ENCODE measurements at regions of chr17 and their contacts with region 1.

Region 1: DNA sequence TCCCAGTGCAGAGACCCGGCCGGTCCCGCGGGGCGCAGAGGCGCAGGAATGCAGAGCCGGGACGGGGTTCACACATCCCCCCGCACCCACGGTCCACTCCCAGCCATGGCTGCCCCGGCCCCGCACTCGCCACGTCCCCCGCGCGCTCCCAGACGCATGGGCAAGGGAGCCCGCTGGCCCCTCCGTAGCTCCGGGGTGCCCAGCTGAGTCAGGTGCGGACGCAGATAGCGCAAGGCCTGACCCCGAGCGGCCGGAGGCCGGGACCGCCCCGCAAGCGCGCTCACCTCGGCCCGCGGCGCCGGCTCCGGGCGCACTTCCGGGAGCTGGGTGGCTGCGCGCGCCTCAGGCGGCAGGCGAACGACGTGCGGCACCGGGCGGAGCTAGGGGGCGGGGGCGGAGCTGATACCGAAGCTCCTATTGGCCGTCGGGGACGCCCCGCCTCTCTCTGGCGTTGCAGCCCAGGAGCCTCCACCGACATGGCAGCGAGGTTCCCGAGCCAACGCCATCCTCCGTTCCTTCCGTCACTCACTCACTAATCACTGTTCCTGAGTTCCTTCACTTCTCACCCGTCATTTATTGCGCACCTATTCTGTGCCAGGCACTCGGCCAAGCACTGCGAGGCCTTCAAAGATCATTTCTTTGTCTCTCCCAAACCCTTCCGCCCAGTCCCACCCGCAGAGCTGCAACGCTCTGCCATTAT is at the start of gene ZNF18:
- DNase-seq: peak; percentile 68
- ATAC-seq: peak; percentile 98
- H3K4me3 ChIP-seq: peak within 1 kb of the TSS; percentile 87
- H3K27ac ChIP-seq: peak within 1 kb of the TSS; percentile 23
- H3K4me1 ChIP-seq: peaks cover 3% of the 10 kb centered on the region; the same call in 1 of the 2 replicates
- H3K27me3 ChIP-seq: no peaks in the 10 kb centered on the region
- CTCF ChIP-seq: no peak
- EP300 ChIP-seq: no peak
- POLR2A ChIP-seq: peak; percentile 96
- RAD21 ChIP-seq: no peak
- polyA plus RNA-seq, gene ZNF18: 4.6 to 6.0 TPM

Region 2: DNA sequence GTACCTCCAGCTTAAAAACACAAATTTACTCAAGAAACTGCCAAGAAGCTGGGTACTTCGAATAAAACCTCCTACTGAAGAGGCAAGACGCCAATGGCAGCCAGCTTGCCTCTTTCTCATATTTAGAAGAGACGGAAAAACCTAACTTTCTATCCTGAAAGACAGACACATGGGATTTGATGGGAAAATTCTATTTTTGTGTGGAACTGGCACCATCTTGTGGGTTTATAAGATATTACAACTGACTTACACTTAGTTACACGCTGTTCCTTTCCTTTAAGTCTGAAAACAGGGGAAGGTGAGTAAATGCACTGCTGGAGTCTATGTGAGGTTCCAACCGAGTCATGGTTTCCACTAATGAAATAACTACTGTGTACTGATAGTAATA is 10.4 kb before region 1 on chr17:
- CTCF ChIA-PET with region 1: interaction called, 6 read pairs
- POLR2A ChIA-PET with region 1: no interaction called
- RAD21 ChIA-PET with region 1: interaction called, 3 read pairs
- SMC1A ChIA-PET with region 1: interaction called, 10 read pairs
- in situ Hi-C with region 1: no loop called
- intact Hi-C with region 1: no loop called
- DNase-seq: no peak
- ATAC-seq: no peak
- H3K4me3 ChIP-seq: no peak overlapping the region
- H3K27ac ChIP-seq: no peak overlapping the region
- H3K4me1 ChIP-seq: no peaks in the 10 kb centered on the region
- H3K27me3 ChIP-seq: no peaks in the 10 kb centered on the region
- CTCF ChIP-seq: peak in 2 of 3 experiments; percentile 32 to 37; a peak in 4 of 6 replicates
- EP300 ChIP-seq: no peak
- POLR2A ChIP-seq: no peak
- RAD21 ChIP-seq: peak; percentile 32; the same call in 1 of the 2 replicates

Region 3: GRCh38 chr17:12020642-12021622 is 23.6 kb after region 1 on chr17 and contains the start of gene MAP2K4:
- CTCF ChIA-PET with region 1: interaction called, 3 read pairs
- POLR2A ChIA-PET with region 1: interaction called, 46 read pairs
- RAD21 ChIA-PET with region 1: interaction called, 20 read pairs
- SMC1A ChIA-PET with region 1: interaction called, 14 read pairs
- in situ Hi-C with region 1: no loop called
- intact Hi-C with region 1: loop called (anchors 1 kb)
- DNase-seq: peak; percentile 40
- ATAC-seq: peak; percentile 97
- H3K4me3 ChIP-seq: peak within 1 kb of the TSS; percentile 61
- H3K27ac ChIP-seq: peak within 1 kb of the TSS; percentile 70
- H3K4me1 ChIP-seq: peaks cover 4% of the 10 kb centered on the region; the same call in 1 of the 2 replicates
- H3K27me3 ChIP-seq: no peaks in the 10 kb centered on the region
- CTCF ChIP-seq: no peak
- EP300 ChIP-seq: no peak
- POLR2A ChIP-seq: peak; percentile 91
- RAD21 ChIP-seq: no peak
- polyA plus RNA-seq, gene MAP2K4: 5.4 to 10.0 TPM

Region 4: DNA sequence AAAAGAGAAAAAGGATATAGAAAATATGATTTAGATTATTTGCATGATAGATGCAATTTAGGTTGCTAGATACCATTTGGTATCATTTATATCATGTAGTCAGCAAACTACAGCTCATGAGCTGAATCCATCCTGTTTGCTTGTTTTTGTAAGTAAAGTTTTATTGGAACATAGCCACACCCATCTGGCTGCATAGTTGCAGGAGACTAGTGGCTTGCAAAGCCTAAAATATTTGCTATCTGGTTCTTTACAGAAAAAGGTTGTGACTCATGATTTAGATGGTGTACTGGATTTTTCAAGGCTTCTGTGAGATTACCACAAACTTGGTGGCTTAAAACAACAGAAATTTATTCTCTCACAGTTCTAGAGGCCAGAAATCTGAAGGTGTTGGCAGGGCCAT is 73.3 kb after region 1 on chr17:
- CTCF ChIA-PET with region 1: no interaction called
- POLR2A ChIA-PET with region 1: no interaction called
- RAD21 ChIA-PET with region 1: no interaction called
- SMC1A ChIA-PET with region 1: no interaction called
- in situ Hi-C with region 1: no loop called
- intact Hi-C with region 1: no loop called
- DNase-seq: no peak
- ATAC-seq: no peak
- H3K4me3 ChIP-seq: no peak overlapping the region
- H3K27ac ChIP-seq: no peak overlapping the region
- H3K4me1 ChIP-seq: no peaks in the 10 kb centered on the region
- H3K27me3 ChIP-seq: no peaks in the 10 kb centered on the region
- CTCF ChIP-seq: no peak
- EP300 ChIP-seq: no peak
- POLR2A ChIP-seq: no peak
- RAD21 ChIP-seq: no peak

Measured in GM12878 (cell line).